ENCODE measurements at regions of chr9 and their contacts with region 1.

Region 1: GRCh38 chr9:120742951-120743416 is 28.7 kb upstream of the MEGF9 start:
- DNase-seq: peak; percentile 38 to 74 (median 59)
- ATAC-seq: peak; percentile 99
- H3K4me3 ChIP-seq: no peak overlapping the region
- H3K27ac ChIP-seq: no peak overlapping the region
- H3K4me1 ChIP-seq: no peaks in the 10 kb centered on the region; a peak in 1 of 5 replicates
- H3K27me3 ChIP-seq: no peaks in the 10 kb centered on the region
- CTCF ChIP-seq: peak; percentile 81 to 95 (median 86)
- EP300 ChIP-seq: no peak
- POLR2A ChIP-seq: no peak
- RAD21 ChIP-seq: peak; percentile 78 to 94

Region 2: DNA sequence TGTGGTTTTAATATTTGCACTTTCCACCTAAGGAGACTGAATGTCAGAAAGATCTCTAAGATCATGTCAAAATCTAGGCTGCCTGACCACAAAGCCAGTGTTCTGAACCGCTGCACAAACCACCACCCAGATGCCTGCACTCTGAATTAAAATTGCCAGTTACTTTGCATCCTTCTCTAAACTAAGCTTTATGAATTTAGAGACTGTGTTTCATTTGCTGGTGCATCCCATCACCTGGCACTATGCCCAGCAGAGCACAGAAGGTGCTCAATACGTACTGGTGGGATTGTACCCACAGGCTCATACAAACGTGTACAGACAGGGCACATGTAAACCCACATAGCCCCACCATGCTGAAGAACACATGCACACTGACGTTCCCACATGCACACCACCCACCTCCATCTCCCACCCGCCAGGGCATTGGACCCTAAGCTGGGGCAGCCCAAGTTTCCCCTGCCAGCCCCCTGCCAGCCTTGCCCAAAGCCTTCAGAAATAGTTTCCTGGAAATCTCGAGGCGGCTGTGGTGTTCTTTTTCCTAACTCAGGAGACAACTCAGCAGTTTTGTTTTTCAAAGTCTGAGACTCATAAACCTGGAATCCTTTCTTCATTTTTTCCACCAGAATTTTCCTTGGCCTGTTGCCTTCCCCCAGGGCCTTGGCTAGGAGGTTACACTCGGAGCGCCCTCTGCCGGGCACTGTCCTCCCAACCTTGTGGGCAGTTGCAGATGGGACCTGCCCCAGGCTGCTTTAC is 193.2 kb after region 1 on chr9:
- CTCF ChIA-PET with region 1: no interaction called
- POLR2A ChIA-PET with region 1: no interaction called
- in situ Hi-C with region 1: no loop called
- intact Hi-C with region 1: loop called (anchors 5 kb)
- DNase-seq: peak; percentile 85 to 92 (median 90)
- ATAC-seq: peak; percentile 96
- H3K4me3 ChIP-seq: no peak overlapping the region
- H3K27ac ChIP-seq: no peak overlapping the region
- H3K4me1 ChIP-seq: peaks cover 13 to 40% of the 10 kb centered on the region in 2 experiments
- H3K27me3 ChIP-seq: peaks cover 2 to 7% of the 10 kb centered on the region in 2 experiments; a peak in 3 of 5 replicates
- CTCF ChIP-seq: peak; percentile 91 to 96 (median 92)
- EP300 ChIP-seq: no peak
- POLR2A ChIP-seq: no peak
- RAD21 ChIP-seq: peak; percentile 89 to 96

Region 3: DNA sequence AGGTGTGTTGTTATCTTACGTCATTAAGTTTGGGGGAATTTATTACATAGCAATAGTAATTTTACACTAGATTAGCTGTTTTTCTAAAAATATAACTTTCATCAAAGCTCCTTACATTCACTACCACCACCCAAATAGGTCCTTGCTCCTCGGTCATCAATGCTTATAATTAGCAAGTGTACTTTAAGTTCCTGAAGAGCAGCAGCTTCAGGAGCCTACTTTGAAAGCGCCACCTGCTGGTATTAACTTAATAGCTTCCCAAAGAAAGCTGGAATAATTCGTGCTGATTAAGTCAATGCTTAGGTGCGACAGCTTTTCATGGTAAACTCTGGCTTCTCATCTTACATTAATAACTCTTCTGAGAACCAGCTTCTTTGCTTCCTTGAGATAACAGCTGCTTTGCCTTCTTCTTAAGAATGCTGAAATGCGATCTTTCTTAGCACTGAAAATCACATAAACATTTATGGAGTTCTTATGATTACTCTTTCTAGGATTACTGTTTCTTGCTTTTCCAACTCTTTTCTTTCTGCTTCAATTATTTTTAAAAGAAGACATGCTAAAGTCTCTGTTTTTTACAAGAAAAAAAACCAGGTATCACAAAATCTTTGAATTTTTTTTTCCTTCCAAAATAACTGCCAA is 317.1 kb after region 1 on chr9:
- CTCF ChIA-PET with region 1: interaction called, 3 read pairs
- POLR2A ChIA-PET with region 1: no interaction called
- in situ Hi-C with region 1: loop called (anchors 10 kb)
- intact Hi-C with region 1: loop called (anchors 5 kb)
- DNase-seq: peak; percentile 24 to 69 (median 38)
- ATAC-seq: peak; percentile 74
- H3K4me3 ChIP-seq: no peak overlapping the region
- H3K27ac ChIP-seq: no peak overlapping the region
- H3K4me1 ChIP-seq: no peaks in the 10 kb centered on the region; a peak in 1 of 5 replicates
- H3K27me3 ChIP-seq: no peaks in the 10 kb centered on the region
- CTCF ChIP-seq: peak; percentile 74 to 79 (median 74)
- EP300 ChIP-seq: no peak
- POLR2A ChIP-seq: no peak
- RAD21 ChIP-seq: peak; percentile 62 to 71

Region 4: DNA sequence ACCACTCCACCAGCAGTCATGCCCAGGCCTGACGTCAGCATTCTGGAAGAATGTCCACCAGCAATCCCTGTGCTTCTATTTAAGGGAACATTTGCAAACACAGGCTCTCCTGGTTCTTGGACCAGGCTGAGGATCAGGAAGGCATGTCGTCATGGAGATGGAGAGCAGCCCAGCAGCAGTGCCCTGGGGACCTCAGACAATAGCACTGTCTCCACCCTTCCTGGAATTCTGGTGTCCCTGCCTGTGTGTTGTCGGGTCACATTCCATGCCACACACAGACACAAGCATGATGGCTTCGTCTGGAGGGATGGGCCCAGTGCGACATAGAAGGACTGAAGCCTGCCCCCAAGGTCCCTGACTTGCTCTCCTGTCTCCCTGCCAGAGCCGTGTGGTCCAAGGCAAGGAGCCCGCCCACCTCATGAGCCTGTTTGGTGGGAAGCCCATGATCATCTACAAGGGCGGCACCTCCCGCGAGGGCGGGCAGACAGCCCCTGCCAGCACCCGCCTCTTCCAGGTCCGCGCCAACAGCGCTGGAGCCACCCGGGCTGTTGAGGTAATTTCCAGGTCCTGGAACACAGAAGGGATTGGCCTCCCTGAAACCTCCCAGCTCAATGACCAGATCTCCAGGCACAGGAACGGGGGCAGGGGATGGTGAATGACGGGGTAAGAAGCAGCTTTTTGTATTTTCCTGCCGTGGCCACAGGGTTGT is 583.3 kb after region 1 on chr9:
- CTCF ChIA-PET with region 1: no interaction called
- POLR2A ChIA-PET with region 1: no interaction called
- in situ Hi-C with region 1: no loop called
- intact Hi-C with region 1: loop called (anchors 10 kb)
- DNase-seq: no peak
- ATAC-seq: no peak
- H3K4me3 ChIP-seq: no peak overlapping the region
- H3K27ac ChIP-seq: no peak overlapping the region
- H3K4me1 ChIP-seq: peaks cover 0 to 4% of the 10 kb centered on the region in 2 experiments; a peak in 2 of 5 replicates
- H3K27me3 ChIP-seq: no peaks in the 10 kb centered on the region
- CTCF ChIP-seq: no peak
- EP300 ChIP-seq: no peak
- POLR2A ChIP-seq: no peak
- RAD21 ChIP-seq: no peak